ENCODE measurements at regions of chr7 and their contacts with region 1.

Region 1: DNA sequence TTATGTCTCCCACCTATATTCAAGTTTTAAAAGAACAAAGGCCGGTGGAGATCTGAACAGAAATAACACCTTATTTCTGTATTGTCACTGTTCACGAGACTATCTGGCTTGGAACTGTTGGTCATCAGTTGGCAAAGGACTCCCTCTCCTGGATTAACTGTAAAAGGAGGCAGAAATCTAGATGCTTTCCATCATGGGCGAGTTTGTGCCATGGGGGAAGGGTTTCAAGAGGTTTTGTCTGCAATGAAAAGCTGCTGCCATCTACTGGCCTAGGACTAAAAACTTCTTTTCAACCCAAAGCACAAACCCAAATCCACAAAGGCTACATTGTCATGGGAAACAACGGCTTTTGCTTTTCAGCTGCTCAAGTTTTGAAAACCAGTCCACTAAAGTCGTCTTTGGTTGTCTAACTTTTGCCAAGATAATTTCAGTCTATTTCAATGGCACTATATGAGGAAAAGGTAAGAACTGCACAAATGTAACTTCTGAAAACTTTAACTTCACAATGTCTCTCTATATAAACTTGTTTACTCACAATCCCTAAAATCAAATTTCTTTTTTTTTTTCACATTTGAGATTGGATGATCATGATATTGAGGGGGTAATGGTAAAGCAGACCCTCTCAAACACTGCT is 196.8 kb downstream of the SKAP2 start:
- DNase-seq: peak in 4 of 5 donors; percentile 8 to 60 (median 50)
- H3K4me3 ChIP-seq: no peak overlapping the region
- H3K4me3 Mint-ChIP-seq: no peak overlapping the region
- H3K27ac ChIP-seq: no peak overlapping the region
- H3K27ac Mint-ChIP-seq: peak overlapping the region in 1 of 8 donors; percentile 22
- H3K4me1 ChIP-seq: no peaks in the 10 kb centered on the region
- H3K4me1 Mint-ChIP-seq: peaks cover 7 to 21% (median 15%) of the 10 kb centered on the region in 3 donors
- H3K27me3 ChIP-seq: no peaks in the 10 kb centered on the region
- H3K27me3 Mint-ChIP-seq: peaks cover 3 to 6% of the 10 kb centered on the region in 2 donors

Region 2: DNA sequence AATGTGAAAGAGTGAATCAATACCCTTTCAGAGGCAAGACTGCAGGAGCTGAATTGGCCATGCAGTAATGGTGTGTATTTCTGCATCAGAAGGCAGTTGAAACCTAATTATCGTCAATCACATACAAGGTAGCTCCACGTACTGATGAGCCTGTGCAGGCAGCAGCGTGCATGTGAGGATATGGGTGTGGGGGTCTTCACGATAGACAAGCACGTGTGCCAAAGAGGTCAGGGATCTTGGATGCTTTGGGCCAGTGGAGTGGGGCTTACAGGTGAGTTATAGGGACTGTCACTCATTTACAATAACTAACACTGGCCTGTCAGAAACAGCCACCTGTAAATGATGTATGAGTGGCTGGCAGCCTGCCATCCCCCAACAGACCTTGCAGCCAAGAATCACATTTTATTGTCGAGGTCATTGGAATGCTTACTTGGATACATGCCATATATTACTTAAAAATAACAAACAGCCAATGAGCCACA is 14.1 kb before region 1 on chr7:
- CTCF ChIA-PET with region 1: no interaction called
- POLR2A ChIA-PET with region 1: no interaction called
- DNase-seq: no peak
- H3K4me3 ChIP-seq: no peak overlapping the region
- H3K4me3 Mint-ChIP-seq: no peak overlapping the region
- H3K27ac ChIP-seq: no peak overlapping the region
- H3K27ac Mint-ChIP-seq: peak overlapping the region in 1 of 8 donors; percentile 35
- H3K4me1 ChIP-seq: no peaks in the 10 kb centered on the region
- H3K4me1 Mint-ChIP-seq: no peaks in the 10 kb centered on the region
- H3K27me3 ChIP-seq: no peaks in the 10 kb centered on the region
- H3K27me3 Mint-ChIP-seq: peaks cover 8 to 24% of the 10 kb centered on the region in 2 donors

Region 3: GRCh38 chr7:26686448-26686981 is 18.9 kb after region 1 on chr7:
- CTCF ChIA-PET with region 1: interaction called, 10 read pairs
- POLR2A ChIA-PET with region 1: no interaction called
- DNase-seq: peak in 2 of 5 donors; percentile 23 to 36
- H3K4me3 ChIP-seq: no peak overlapping the region
- H3K4me3 Mint-ChIP-seq: no peak overlapping the region
- H3K27ac ChIP-seq: no peak overlapping the region
- H3K27ac Mint-ChIP-seq: no peak overlapping the region
- H3K4me1 ChIP-seq: no peaks in the 10 kb centered on the region
- H3K4me1 Mint-ChIP-seq: peaks cover 0 to 2% (median 0%) of the 10 kb centered on the region in 3 donors
- H3K27me3 ChIP-seq: no peaks in the 10 kb centered on the region
- H3K27me3 Mint-ChIP-seq: peaks cover 0 to 16% of the 10 kb centered on the region in 2 donors

Region 4: DNA sequence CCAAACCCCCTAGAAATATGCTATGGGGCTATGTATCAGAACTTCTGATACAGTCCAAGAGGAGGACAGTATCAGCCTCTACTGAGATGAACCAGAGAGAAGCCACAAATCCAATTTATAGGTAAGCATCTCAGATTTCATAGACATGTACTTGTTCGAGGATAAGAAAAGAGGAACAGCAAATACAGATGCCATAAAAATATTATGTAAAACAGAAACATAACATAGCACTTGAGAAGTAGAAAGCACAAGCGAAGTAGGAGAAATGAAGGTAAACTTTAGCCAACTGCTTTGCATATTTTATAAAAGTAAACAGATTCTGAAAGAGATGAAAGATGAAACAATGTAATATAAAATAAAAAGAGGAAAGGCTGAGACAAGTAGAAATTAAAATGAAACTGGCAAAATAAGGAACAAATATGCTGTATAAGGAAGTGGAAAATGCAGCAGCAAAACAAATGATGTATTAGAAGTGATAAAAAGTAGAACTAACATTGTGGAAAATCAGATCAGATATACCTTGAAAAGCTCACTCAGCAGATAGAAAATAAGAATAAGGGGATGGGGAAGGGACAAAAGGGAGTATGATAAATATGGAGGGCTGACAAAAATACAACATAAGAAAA is 61.6 kb after region 1 on chr7:
- CTCF ChIA-PET with region 1: no interaction called
- POLR2A ChIA-PET with region 1: no interaction called
- DNase-seq: no peak
- H3K4me3 ChIP-seq: no peak overlapping the region
- H3K4me3 Mint-ChIP-seq: no peak overlapping the region
- H3K27ac ChIP-seq: no peak overlapping the region
- H3K27ac Mint-ChIP-seq: no peak overlapping the region
- H3K4me1 ChIP-seq: no peaks in the 10 kb centered on the region
- H3K4me1 Mint-ChIP-seq: no peaks in the 10 kb centered on the region
- H3K27me3 ChIP-seq: no peaks in the 10 kb centered on the region
- H3K27me3 Mint-ChIP-seq: peaks cover 0 to 1% of the 10 kb centered on the region in 2 donors

Measured in CD8-positive, alpha-beta memory T cell (primary cell).